A549 (cell line): ENCODE measurements at regions of chr2 and their contacts with region 1.

Region 1: DNA sequence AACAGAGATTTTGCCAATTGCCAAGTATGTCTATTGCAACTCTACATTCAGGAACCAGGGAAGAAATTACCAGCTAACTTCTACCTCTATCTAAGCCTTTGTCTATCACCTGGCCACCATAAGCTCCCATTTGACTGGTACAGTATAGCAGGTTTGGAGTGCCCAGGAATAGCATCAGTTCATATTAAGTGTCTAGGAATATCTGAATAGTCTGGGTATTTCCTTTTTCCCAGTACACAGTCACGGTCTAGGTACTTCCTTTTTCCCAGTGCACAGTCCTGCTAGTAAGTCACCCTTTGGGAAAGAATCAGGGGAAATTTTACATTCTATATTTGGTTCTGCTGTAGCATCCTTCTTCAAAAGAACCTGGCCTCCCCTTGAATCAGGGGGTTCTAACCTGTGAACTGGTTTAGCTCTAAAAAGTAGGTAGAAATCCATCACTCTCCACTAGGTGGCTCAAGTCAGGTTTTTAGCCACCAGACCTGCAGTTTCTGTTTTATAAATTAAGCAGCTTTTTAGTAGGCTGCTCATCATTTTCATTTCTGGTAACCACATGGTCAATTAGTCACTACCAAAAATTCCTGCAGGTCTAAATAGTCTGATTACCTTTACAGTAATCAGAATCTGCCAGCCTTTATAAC is 49.3 kb upstream of the DNAJC10 start:
- DNase-seq: peak; percentile 10 to 29
- ATAC-seq: peak; percentile 75 to 87; a peak in 4 of 6 replicates
- H3K4me3 ChIP-seq: no peak overlapping the region
- H3K27ac ChIP-seq: no peak overlapping the region
- H3K4me1 ChIP-seq: no peaks in the 10 kb centered on the region
- CTCF ChIP-seq: peak; percentile 48
- EP300 ChIP-seq: no peak
- POLR2A ChIP-seq: no peak
- RAD21 ChIP-seq: peak; percentile 25 to 34; a peak in 2 of 5 replicates

Region 2: DNA sequence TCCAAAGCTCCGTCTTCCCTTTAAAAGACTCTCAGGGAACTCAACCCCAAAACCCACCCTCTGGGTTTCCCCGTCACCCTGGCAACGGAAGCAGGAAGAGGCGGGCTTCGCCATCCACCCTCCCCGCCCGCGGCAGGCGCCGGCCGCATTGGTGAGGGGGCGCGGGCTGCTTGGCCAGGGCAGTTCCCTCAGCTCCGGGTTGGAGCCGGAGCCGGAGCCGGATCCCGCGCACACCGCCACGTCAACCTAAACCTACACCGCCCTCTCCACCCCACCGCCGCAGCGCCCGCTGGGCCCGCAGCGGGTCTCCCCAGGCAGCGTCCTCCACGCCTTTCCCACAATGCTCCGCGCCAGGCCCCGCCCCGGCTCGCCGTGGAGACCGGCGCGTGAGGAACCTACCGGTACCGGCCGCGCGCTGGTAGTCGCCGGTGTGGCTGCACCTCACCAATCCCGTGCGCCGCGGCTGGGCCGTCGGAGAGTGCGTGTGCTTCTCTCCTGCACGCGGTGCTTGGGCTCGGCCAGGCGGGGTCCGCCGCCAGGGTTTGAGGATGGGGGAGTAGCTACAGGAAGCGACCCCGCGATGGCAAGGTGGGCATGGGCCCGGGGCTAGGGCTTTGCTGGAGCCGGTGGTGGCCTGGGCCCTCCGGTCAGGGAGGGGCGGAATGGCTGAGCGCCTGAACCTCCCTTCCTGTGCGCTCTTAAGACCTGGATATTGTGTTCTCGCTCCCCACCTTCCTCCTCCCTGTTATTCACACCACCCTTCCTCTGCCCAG is 49.3 kb after region 1 on chr2 and contains the start of gene DNAJC10:
- CTCF ChIA-PET with region 1: interaction called, 12 read pairs
- POLR2A ChIA-PET with region 1: interaction called, 4 read pairs
- DNase-seq: peak; percentile 71 to 89
- ATAC-seq: peak; percentile 96
- H3K4me3 ChIP-seq: peak within 1 kb of the TSS; percentile 97
- H3K27ac ChIP-seq: peak within 1 kb of the TSS; percentile 92 to 97
- H3K4me1 ChIP-seq: peaks cover 20% of the 10 kb centered on the region
- CTCF ChIP-seq: no peak
- EP300 ChIP-seq: no peak
- POLR2A ChIP-seq: peak; percentile 98
- RAD21 ChIP-seq: no peak
- polyA plus RNA-seq, gene DNAJC10: 99.9 and 126 TPM in 2 replicates